Posterior vena cava (tissue), 2 donors: ENCODE measurements at regions of chr4 and their contacts with region 1.

Region 1: GRCh38 chr4:165548702-165549101 is 169.9 kb downstream of the CPE start:
- DNase-seq: no peak

Region 2: DNA sequence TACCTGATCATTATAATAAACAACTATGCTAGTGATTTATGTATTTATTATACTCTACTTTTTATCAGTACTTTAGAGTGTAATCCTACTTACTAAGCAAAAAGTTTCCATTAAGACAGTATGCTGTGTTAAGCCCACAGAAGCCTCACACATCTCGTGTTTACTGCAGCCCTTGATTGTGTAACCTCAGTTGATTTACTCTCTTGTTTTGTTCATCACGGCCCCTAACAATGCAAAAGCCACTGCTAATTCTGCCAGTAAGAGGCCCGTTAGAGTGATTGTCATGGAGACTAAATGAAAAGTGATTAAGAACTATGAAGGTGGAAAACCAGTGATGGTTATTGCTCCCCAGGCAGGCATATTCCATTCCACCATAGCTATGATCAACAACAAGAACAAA is 1249.4 kb after region 1 on chr4:
- intact Hi-C with region 1: loop called in 1 of 2 experiments (anchors 5 kb)
- DNase-seq: no peak